ENCODE measurements at regions of chrX and their contacts with region 1.

Region 1: DNA sequence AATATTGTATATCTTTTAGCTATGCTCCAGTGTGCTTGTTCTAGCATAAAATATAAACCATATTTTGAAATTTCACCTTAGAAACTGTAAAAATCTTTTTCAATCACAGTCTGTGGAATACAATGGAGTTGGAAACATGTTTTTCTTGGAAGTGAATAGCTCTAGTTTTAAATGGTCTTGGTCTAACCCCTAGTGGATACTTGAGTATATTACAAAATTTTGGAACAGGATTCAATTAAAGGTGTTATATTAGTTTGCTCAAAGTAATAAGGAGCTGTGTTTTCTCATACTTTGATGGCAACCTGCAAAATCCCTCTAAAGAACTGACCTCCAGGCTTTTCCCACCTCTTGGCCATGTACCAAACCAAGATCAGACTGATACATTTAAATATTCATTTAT is 48.2 kb downstream of the STK26 start:
- DNase-seq: peak; percentile 31
- H3K4me3 ChIP-seq: no peak overlapping the region
- H3K27ac ChIP-seq: no peak overlapping the region
- H3K4me1 ChIP-seq: no peaks in the 10 kb centered on the region
- H3K27me3 ChIP-seq: no peaks in the 10 kb centered on the region
- CTCF ChIP-seq: no peak
- POLR2A ChIP-seq: no peak

Region 2: DNA sequence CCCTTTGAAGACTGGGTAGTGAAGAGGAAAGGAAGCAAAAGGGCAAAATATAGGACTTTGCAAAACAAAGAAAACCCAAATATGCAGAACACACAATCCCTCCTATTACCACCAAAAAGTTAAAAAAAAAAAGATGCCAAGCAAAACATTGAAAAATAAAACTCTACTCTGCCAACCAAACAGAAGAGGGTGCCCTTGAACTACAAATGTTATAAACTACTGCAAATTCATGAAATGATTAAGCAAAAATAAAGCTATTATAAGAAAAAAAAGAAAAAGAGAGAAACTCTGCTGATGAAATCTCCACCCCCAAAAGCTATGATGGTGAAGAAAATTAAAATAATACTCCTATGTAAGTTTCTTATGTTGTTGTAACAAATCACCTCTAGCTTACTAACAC is 216.7 kb before region 1 on chrX:
- CTCF ChIA-PET with region 1: interaction called, 65 read pairs
- POLR2A ChIA-PET with region 1: no interaction called
- dilution Hi-C with region 1: no loop called
- intact Hi-C with region 1: no loop called
- DNase-seq: peak; percentile 20
- H3K4me3 ChIP-seq: no peak overlapping the region
- H3K27ac ChIP-seq: no peak overlapping the region
- H3K4me1 ChIP-seq: no peaks in the 10 kb centered on the region
- H3K27me3 ChIP-seq: no peaks in the 10 kb centered on the region
- CTCF ChIP-seq: no peak
- POLR2A ChIP-seq: no peak

Region 3: GRCh38 chrX:132059973-132060540 is 11.2 kb before region 1 on chrX:
- CTCF ChIA-PET with region 1: interaction called, 12 read pairs
- POLR2A ChIA-PET with region 1: no interaction called
- dilution Hi-C with region 1: no loop called
- intact Hi-C with region 1: no loop called
- DNase-seq: no peak
- H3K4me3 ChIP-seq: no peak overlapping the region
- H3K27ac ChIP-seq: no peak overlapping the region
- H3K4me1 ChIP-seq: no peaks in the 10 kb centered on the region
- H3K27me3 ChIP-seq: no peaks in the 10 kb centered on the region
- CTCF ChIP-seq: no peak
- POLR2A ChIP-seq: no peak

Region 4: DNA sequence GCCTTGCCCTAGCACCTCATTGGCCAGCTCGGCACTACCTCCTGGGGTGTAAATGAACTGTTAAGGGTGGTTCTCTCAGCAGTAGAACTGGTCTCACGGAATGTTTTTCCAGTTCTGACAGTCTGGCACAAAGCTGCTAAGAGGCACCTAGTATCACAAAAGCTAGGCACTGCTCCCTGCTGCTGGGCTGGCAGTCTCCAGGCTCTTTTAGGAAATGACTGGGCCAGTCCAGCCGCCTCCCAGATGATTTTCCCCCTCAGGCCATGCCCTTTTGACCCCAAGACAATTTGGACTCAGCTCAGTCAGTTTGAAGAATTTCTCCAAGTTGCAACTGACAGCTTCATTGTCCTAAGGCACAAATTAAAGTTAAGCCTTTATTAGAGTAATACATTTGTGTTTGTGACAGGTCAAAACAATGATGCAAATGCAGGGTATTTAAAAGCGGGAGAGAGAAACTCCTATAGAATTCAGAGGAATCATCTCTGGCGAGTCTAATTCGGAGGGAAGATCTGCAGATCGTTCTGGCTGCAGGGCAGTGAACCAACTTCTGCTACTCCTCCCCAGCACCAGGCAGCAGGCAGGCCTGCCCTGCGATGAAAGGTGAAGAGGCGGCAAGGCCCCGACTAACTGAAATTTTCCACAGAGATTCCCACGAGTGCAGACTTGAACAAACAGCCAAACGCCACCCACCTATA is 48.7 kb after region 1 on chrX:
- CTCF ChIA-PET with region 1: no interaction called
- POLR2A ChIA-PET with region 1: no interaction called
- dilution Hi-C with region 1: no loop called
- intact Hi-C with region 1: no loop called
- DNase-seq: no peak
- H3K4me3 ChIP-seq: no peak overlapping the region
- H3K27ac ChIP-seq: no peak overlapping the region
- H3K4me1 ChIP-seq: no peaks in the 10 kb centered on the region
- H3K27me3 ChIP-seq: no peaks in the 10 kb centered on the region
- CTCF ChIP-seq: no peak
- POLR2A ChIP-seq: no peak